GM13976 (cell line): ENCODE measurements at regions of chr7 and their contacts with region 1.

Region 1: GRCh38 chr7:143240291-143241168 is 18.7 kb downstream of the TAS2R40 start:
- DNase-seq: peak; percentile 61
- CTCF ChIP-seq: peak; percentile 76

Region 2: GRCh38 chr7:143416565-143417149 is 176.1 kb after region 1 on chr7:
- in situ Hi-C with region 1: loop called (anchors 25 kb)
- DNase-seq: peak; percentile 74
- CTCF ChIP-seq: peak; percentile 39